ENCODE measurements at regions of chr12 and their contacts with region 1.

Region 1: GRCh38 chr12:68358532-68359485 is 26.6 kb upstream of the MDM1 start:
- DNase-seq: peak; percentile 57
- ATAC-seq: peak; percentile 91
- H3K4me3 ChIP-seq: peak overlapping the region in 2 of 3 experiments; percentile 41 to 46; a peak in 4 of 6 replicates
- H3K27ac ChIP-seq: no peak overlapping the region
- H3K4me1 ChIP-seq: peaks cover 8% of the 10 kb centered on the region; the same call in 1 of the 2 replicates
- H3K27me3 ChIP-seq: no peaks in the 10 kb centered on the region; a peak in 1 of 5 replicates
- CTCF ChIP-seq: peak; percentile 72
- EP300 ChIP-seq: no peak
- POLR2A ChIP-seq: no peak
- RAD21 ChIP-seq: no peak

Region 2: DNA sequence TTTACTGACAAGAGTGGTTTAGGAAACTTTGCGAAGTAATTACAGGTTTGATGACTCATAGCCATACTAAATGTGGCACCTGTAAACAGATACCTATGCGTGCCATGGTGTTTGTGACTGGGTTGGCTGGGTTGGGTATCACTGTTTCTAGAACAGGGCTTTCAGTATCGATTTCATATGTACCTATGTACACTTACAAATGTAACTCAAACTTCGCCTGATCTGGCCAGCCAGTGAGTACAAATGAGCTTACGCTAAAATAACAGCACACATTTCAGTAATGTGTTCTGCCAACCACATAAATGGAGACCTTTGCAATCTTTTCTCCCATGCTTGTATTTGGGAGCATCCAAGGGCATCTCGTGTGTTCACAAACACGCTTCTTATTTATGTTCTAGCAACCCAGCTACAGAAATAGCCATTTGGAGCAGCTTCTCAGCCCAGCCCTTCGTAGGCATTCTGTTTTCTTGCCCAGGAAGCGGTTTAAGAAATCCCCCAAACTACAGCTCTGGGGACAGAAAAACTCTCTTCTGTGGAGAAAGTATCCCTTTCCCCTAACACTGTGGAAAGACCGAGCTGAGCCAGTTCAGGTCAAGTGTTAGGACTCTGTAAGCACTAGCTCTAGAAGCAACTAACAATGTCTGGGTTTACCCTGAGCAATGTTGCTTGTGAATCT is 15.6 kb after region 1 on chr12:
- CTCF ChIA-PET with region 1: no interaction called
- POLR2A ChIA-PET with region 1: no interaction called
- in situ Hi-C with region 1: no loop called
- intact Hi-C with region 1: no loop called
- DNase-seq: no peak
- ATAC-seq: no peak
- H3K4me3 ChIP-seq: no peak overlapping the region
- H3K27ac ChIP-seq: no peak overlapping the region
- H3K4me1 ChIP-seq: no peaks in the 10 kb centered on the region
- H3K27me3 ChIP-seq: no peaks in the 10 kb centered on the region
- CTCF ChIP-seq: no peak
- EP300 ChIP-seq: no peak
- POLR2A ChIP-seq: no peak
- RAD21 ChIP-seq: no peak

Region 3: GRCh38 chr12:68497702-68498101 is 138.9 kb after region 1 on chr12:
- CTCF ChIA-PET with region 1: no interaction called
- POLR2A ChIA-PET with region 1: no interaction called
- in situ Hi-C with region 1: no loop called
- intact Hi-C with region 1: loop called (anchors 2 kb)
- DNase-seq: no peak
- ATAC-seq: no peak
- H3K4me3 ChIP-seq: no peak overlapping the region
- H3K27ac ChIP-seq: no peak overlapping the region
- H3K4me1 ChIP-seq: no peaks in the 10 kb centered on the region
- H3K27me3 ChIP-seq: no peaks in the 10 kb centered on the region; a peak in 1 of 5 replicates
- CTCF ChIP-seq: no peak
- EP300 ChIP-seq: no peak
- POLR2A ChIP-seq: no peak
- RAD21 ChIP-seq: no peak